ENCODE measurements at regions of chr5 and their contacts with region 1.

Region 1: DNA sequence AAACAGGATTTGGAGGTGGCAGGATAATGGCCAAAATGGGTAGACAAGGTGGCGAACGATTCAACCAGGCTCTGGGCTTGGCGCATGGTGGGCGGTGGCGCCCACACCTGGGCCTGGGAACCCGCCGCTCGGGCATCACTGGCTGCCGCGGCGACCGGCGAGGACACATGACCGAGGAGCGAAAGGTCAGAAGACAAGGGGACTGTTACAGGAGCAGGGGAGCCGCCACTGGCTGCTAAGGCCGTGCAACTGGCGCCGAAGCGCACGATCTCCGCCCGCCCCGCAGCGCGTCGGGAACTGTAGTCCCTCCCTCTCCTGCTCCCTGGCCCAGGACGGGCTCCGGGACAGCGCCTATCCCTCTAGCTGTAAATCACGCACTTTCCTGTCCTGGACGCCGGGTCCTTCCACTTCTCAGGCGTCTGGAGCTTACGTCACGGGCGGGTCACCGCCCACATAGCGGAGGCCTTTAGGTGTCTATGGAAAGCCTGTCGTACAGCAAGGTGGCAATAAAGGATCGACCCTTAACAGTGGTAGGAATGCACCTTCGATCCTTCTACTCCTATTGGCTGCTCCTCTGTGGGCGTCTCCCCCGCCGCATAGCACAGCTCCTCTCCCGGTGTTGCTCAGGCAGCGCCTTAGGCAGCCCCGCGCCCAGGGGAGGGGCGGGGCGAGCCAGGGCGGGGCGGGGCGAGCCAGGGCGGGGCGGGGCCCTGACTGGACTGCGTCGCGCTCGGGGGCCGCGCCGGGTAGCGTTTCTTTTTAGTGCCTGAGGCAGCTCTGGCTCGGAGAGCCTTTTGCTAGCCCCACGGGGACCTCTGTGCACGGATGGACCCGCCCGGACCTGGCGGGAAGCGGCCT is at the start of gene ICE1:
- DNase-seq: peak; percentile 91 to 98 (median 94)
- ATAC-seq: peak; percentile 87
- H3K4me3 ChIP-seq: peak within 1 kb of the TSS; percentile 78 to 84
- H3K4me3 Mint-ChIP-seq: no peak within 1 kb of the TSS
- H3K27ac ChIP-seq: peak within 1 kb of the TSS; percentile 96 to 99
- H3K27ac Mint-ChIP-seq: peak within 1 kb of the TSS; percentile 99
- H3K4me1 ChIP-seq: peaks cover 42% of the 10 kb centered on the region
- H3K4me1 Mint-ChIP-seq: peaks cover 18% of the 10 kb centered on the region
- H3K27me3 ChIP-seq: no peaks in the 10 kb centered on the region
- H3K27me3 Mint-ChIP-seq: no peaks in the 10 kb centered on the region
- CTCF ChIP-seq: no peak
- total RNA-seq, gene ICE1: 48.3 to 52.8 TPM

Region 2: DNA sequence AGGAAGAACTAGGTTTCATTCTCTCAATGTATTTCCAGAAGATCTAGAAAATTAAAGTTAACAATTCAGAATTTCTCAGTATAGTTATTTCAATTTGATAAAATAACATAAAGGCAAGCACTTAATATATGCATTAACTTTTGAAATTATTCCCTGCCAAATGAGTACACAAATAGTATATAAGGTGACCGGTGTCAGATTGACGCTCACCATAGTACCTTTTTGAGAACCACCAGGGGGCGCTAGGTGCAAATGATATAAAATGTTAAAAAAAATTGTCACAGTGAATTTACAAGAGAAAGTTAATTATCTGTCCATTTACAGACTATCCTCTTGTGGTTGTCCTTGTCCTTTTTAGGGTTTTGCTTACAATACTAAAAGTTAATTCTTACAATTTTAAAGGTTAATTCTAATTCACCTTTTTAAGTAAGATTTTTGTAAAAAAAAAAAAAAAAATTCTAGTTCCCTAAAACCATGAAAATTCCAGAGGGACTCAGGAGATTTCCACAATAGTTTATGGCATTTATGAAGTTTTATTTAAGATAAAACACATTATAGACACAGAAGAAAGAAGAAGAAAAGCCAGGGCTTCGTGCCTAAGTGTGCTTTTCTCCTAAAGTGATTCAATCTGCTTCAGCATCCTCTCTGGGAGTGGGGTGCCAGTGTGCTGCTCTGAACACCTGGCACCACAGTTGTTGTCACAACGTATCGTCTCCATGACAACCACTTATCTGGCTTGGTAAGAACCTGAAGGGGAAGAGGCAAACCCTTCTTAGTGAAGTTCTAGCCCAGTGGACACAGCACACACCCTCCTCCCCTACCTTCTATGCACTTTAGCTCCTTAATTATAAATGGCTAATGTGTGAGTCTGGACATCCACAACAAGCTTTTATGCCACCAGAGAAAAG is 280.3 kb before region 1 on chr5:
- CTCF ChIA-PET with region 1: interaction called, 8 read pairs
- POLR2A ChIA-PET with region 1: no interaction called
- intact Hi-C with region 1: loop called in 1 of 2 experiments (anchors 1 kb)
- DNase-seq: peak in 6 of 9 experiments; percentile 23 to 68 (median 56)
- ATAC-seq: no peak
- H3K4me3 ChIP-seq: no peak overlapping the region
- H3K4me3 Mint-ChIP-seq: no peak overlapping the region
- H3K27ac ChIP-seq: no peak overlapping the region
- H3K27ac Mint-ChIP-seq: no peak overlapping the region
- H3K4me1 ChIP-seq: no peaks in the 10 kb centered on the region
- H3K4me1 Mint-ChIP-seq: peaks cover 8% of the 10 kb centered on the region
- H3K27me3 ChIP-seq: peaks cover 2 to 8% of the 10 kb centered on the region in 2 experiments
- H3K27me3 Mint-ChIP-seq: peaks cover 26% of the 10 kb centered on the region
- CTCF ChIP-seq: peak; percentile 95

Region 3: DNA sequence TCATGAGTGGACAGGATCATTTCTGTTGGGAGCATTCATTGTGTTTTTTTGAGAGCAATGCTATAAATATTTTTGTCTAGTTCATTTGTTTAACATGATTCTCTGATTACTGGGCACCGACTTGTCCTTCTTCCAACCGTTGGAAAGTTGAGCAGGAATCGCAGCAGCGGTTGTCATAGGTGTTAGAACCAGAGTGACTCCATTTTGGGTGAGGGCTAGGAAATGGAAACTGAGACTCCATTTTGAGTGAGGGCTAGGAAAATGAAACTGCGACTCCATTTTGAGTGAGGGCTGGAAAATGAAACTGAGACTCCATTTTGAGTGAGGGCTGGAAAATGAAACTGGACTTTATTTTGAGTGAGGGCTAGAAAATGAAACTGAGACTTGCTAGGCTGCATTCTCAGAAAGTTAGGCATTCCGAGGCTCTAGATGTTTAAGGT is 100.9 kb after region 1 on chr5:
- CTCF ChIA-PET with region 1: no interaction called
- POLR2A ChIA-PET with region 1: no interaction called
- intact Hi-C with region 1: loop called in 1 of 2 experiments (anchors 2 kb)
- DNase-seq: peak in 3 of 9 experiments; percentile 13 to 85 (median 74)
- ATAC-seq: peak; percentile 77
- H3K4me3 ChIP-seq: peak overlapping the region in 1 of 2 experiments; percentile 27
- H3K4me3 Mint-ChIP-seq: peak overlapping the region; percentile 78
- H3K27ac ChIP-seq: peak overlapping the region in 1 of 2 experiments; percentile 25
- H3K27ac Mint-ChIP-seq: peak overlapping the region; percentile 22
- H3K4me1 ChIP-seq: peaks cover 7% of the 10 kb centered on the region
- H3K4me1 Mint-ChIP-seq: peaks cover 12% of the 10 kb centered on the region
- H3K27me3 ChIP-seq: no peaks in the 10 kb centered on the region
- H3K27me3 Mint-ChIP-seq: peaks cover 2% of the 10 kb centered on the region
- CTCF ChIP-seq: no peak

Region 4: GRCh38 chr5:5605170-5605764 is 183.1 kb after region 1 on chr5:
- CTCF ChIA-PET with region 1: no interaction called
- POLR2A ChIA-PET with region 1: no interaction called
- intact Hi-C with region 1: no loop called
- DNase-seq: no peak
- ATAC-seq: no peak
- H3K4me3 ChIP-seq: no peak overlapping the region
- H3K4me3 Mint-ChIP-seq: no peak overlapping the region
- H3K27ac ChIP-seq: no peak overlapping the region
- H3K27ac Mint-ChIP-seq: no peak overlapping the region
- H3K4me1 ChIP-seq: no peaks in the 10 kb centered on the region
- H3K4me1 Mint-ChIP-seq: no peaks in the 10 kb centered on the region
- H3K27me3 ChIP-seq: no peaks in the 10 kb centered on the region
- H3K27me3 Mint-ChIP-seq: peaks cover 7% of the 10 kb centered on the region
- CTCF ChIP-seq: no peak

Region 5: DNA sequence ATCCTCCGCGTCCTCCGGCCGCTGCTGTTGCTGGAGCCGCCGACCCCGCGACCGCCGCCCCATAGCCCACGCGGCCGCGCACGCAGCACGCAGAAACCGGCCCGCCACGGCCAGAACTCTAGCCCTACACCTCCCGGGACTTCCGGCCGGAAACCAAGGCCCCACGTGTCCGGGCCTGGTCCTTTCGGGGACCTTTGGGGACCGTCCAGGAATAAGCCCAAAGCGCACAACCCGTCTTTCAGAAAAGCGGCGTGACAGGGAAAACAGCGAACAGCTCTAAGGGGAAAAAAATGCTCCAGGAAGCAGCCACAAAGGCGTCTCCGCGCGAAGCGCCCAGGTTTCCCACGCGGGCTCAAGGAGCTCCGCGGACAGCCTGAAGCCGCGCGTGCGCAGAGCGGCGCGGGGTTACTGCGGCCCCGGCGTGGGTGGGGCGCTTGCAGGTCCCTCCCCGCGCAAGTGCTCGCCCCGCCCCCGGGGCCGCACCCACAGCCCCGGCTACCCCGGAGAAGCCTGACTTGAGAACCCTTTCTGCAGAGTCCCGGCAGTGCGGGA is 1210.8 kb after region 1 on chr5 and contains the starts of genes NSUN2 and SRD5A1:
- CTCF ChIA-PET with region 1: no interaction called
- POLR2A ChIA-PET with region 1: interaction called, 9 read pairs
- intact Hi-C with region 1: loop called (anchors 1 kb)
- DNase-seq: peak; percentile 81 to 98 (median 90)
- ATAC-seq: peak; percentile 89
- H3K4me3 ChIP-seq: peak within 1 kb of the TSS; percentile 75 to 83
- H3K4me3 Mint-ChIP-seq: peak within 1 kb of the TSS; percentile 85
- H3K27ac ChIP-seq: peak within 1 kb of the TSS; percentile 92 to 100
- H3K27ac Mint-ChIP-seq: peak within 1 kb of the TSS; percentile 99
- H3K4me1 ChIP-seq: peaks cover 22% of the 10 kb centered on the region
- H3K4me1 Mint-ChIP-seq: peaks cover 52% of the 10 kb centered on the region
- H3K27me3 ChIP-seq: no peaks in the 10 kb centered on the region
- H3K27me3 Mint-ChIP-seq: no peaks in the 10 kb centered on the region
- CTCF ChIP-seq: no peak
- total RNA-seq, gene NSUN2: 69.6 to 74.3 TPM
- total RNA-seq, gene SRD5A1: 2.1 to 2.8 TPM

Region 6: DNA sequence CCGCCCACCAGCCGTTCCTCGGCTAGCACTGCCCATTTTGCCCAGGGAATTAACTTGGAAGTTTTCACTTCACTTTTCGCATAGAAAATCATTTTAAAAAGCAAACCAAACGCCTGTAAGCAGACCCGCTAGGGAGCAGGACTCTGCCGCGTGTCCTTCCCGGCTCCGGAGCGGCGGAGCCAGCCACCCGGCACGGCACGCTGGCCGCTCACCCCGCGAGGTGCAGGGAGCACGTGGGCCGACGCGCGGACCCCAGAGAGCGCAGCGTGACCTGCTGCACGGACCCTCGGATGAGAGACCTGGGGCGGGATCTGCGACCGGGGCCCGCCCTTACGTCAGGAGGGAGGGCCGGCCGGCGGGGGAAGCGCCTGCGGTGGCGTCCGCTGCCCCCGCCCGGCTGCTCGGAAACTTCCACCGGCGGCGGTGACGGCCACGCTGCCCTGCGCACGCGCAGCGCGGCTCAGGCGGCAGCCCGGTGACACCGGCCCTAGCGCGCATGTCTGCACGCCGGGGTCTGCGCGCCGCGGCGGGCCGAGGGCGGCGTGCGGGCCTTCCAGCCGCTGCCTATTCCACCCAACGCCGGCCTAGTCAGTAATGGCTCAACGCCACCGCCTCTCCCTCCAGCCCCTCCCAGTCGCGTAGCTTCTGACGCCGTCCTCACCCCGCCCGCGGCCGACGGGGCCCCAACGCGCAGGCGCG is 1290.5 kb after region 1 on chr5:
- CTCF ChIA-PET with region 1: no interaction called
- POLR2A ChIA-PET with region 1: interaction called, 4 read pairs
- intact Hi-C with region 1: loop called in 1 of 2 experiments (anchors 1 kb)
- DNase-seq: peak in 8 of 9 experiments; percentile 95 to 99 (median 96)
- ATAC-seq: peak; percentile 76
- H3K4me3 ChIP-seq: peak overlapping the region; percentile 83 to 91
- H3K4me3 Mint-ChIP-seq: peak overlapping the region; percentile 89
- H3K27ac ChIP-seq: peak overlapping the region; percentile 77 to 86
- H3K27ac Mint-ChIP-seq: peak overlapping the region; percentile 92
- H3K4me1 ChIP-seq: peaks cover 28% of the 10 kb centered on the region
- H3K4me1 Mint-ChIP-seq: peaks cover 39% of the 10 kb centered on the region
- H3K27me3 ChIP-seq: peaks cover 0 to 2% of the 10 kb centered on the region in 2 experiments
- H3K27me3 Mint-ChIP-seq: no peaks in the 10 kb centered on the region
- CTCF ChIP-seq: no peak